BJ (cell line): ENCODE measurements at regions of chr2 and their contacts with region 1.

Region 1: GRCh38 chr2:240913810-240914644 is 7.9 kb downstream of the CROCC2 start:
- DNase-seq: no peak
- H3K4me3 ChIP-seq: no peak overlapping the region
- H3K27me3 ChIP-seq: no peaks in the 10 kb centered on the region
- CTCF ChIP-seq: peak; percentile 97

Region 2: DNA sequence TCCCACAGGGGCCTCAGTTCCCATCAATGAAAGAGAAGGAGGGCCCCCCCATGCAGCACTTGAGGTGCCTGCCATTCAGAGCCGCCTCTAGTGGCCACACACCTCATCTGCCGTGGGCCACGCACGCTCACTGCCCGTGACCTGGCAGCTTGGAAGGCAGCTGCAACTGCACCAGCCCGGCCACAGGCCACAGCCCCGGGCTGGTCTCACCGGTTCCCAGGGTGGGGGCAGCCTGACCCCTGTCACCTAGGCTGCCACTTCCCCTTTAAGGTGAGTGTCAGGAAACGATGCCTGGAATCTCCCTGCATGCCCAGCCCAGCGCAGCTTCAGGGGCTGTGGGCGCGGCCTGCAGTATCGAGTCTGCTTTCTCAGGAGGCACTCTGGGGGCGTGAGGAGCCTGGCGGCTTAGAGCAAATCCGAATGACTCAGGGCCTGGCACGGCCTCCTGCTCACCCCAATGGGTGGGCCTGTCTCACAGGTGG is 20.6 kb before region 1 on chr2:
- CTCF ChIA-PET with region 1: interaction called, 21 read pairs
- POLR2A ChIA-PET with region 1: no interaction called
- DNase-seq: no peak
- H3K4me3 ChIP-seq: no peak overlapping the region
- H3K27me3 ChIP-seq: no peaks in the 10 kb centered on the region
- CTCF ChIP-seq: no peak

Region 3: GRCh38 chr2:240926516-240927389 is 12.7 kb after region 1 on chr2:
- CTCF ChIA-PET with region 1: interaction called, 14 read pairs
- POLR2A ChIA-PET with region 1: no interaction called
- DNase-seq: no peak
- H3K4me3 ChIP-seq: no peak overlapping the region
- H3K27me3 ChIP-seq: no peaks in the 10 kb centered on the region
- CTCF ChIP-seq: no peak

Region 4: GRCh38 chr2:241009601-241010530 is 95.8 kb after region 1 on chr2:
- CTCF ChIA-PET with region 1: interaction called, 14 read pairs
- POLR2A ChIA-PET with region 1: no interaction called
- DNase-seq: peak; percentile 41
- H3K4me3 ChIP-seq: peak overlapping the region; percentile 26
- H3K27me3 ChIP-seq: no peaks in the 10 kb centered on the region
- CTCF ChIP-seq: no peak